ENCODE measurements at regions of chr5 and their contacts with region 1.

Region 1: DNA sequence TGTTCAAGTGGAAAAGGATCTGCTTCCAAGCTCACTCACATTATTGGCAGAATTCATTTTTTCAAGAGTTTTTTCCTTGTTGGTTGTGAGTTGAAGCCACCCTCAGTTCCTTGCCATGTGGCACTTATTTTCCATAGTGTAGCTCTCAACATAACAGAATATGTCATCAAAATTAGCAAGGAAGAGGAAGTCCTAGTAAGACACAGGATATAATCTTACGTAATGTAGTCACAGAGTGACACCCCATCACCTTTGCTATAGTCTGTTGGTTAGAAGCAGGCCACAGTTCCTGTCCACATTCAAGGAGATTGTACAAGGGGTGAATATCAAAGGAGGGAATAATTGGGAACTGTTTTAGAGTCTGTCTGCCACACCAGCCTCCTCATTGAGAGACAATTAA is 15.7 kb downstream of the IRGM start:
- DNase-seq: no peak

Region 2: DNA sequence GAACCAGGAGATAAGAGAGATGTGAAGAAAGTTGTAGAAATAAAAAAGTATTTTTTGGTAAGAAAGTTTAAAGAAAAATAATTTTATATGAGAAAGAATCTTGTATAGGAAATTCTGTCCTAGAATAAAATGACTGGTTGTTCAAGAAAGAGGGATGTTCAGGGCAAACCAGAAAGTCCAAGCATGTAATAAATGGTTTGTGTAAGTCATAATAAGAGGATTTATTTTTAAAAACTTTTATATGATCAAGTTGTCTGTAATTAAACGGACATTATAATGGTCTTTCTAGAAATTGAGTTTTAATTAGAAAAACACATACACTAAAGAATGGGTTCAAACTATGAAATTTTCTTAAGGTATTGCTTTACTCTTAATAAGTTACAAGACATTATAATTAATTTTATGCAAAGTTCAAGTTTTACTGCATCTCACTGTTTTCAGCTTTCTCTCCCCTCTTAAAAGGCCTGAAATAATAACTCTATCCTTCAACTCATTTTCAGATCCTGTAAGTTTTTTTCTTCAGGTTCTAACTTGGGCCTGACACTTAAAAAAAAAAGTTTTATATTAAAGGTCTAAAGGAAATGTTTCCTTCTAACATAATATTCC is 98.8 kb after region 1 on chr5:
- intact Hi-C with region 1: no loop called
- DNase-seq: no peak

Region 3: DNA sequence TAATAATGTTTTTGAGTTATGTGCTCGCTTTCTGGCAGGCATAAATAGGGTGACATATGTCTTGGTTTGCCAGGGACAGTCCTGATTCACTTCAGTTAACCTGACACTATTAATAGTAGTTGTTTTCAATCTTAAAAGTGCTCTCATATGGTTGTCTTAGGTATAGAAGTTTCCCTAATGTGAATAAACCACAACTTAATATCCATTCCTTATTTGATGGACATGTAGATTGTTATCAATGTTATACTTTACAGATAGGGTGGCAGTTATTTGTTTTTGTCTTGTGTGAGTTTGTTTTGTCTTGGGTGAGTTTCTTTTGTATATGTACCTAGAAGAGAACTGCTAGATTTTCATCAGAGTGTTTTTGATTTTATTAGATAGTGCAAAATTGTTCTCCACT is 917.6 kb after region 1 on chr5:
- intact Hi-C with region 1: loop called in 1 of 2 experiments (anchors 10 kb)
- DNase-seq: no peak